ENCODE measurements at regions of chr6 and their contacts with region 1.

Region 1: GRCh38 chr6:31827286-31828079 is at the start of gene HSPA1B:
- DNase-seq: peak; percentile 100
- ATAC-seq: peak; percentile 87
- H3K4me3 ChIP-seq: peak within 1 kb of the TSS; percentile 71 to 72
- H3K27ac ChIP-seq: peak within 1 kb of the TSS; percentile 94
- H3K4me1 ChIP-seq: peaks cover 47 to 71% of the 10 kb centered on the region in 2 experiments
- H3K27me3 ChIP-seq: no peaks in the 10 kb centered on the region
- CTCF ChIP-seq: no peak
- POLR2A ChIP-seq: peak; percentile 99
- RAD21 ChIP-seq: no peak
- total RNA-seq, gene HSPA1B: 214 TPM

Region 2: DNA sequence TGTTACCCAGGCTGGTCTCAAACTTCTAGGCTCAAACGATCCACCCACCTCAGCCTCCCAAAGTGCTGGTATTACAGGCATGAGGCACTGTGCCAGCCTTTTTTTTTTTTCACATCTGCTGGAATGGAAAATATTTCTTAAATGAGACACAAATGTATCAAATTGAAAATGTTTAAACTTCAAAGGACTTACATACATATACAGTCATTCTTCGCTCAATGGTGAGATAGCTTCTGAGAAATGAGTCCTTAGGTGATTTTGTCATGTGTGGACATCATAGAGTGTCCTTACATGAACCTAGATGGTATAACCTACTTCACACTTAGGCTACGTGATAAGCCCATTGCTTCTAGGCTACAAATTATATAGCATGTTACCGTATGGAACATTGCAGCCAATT is 381.0 kb before region 1 on chr6:
- CTCF ChIA-PET with region 1: no interaction called
- POLR2A ChIA-PET with region 1: no interaction called
- RAD21 ChIA-PET with region 1: no interaction called
- intact Hi-C with region 1: no loop called
- DNase-seq: no peak
- ATAC-seq: no peak
- H3K4me3 ChIP-seq: no peak overlapping the region
- H3K27ac ChIP-seq: no peak overlapping the region
- H3K4me1 ChIP-seq: peaks cover 2 to 10% of the 10 kb centered on the region in 2 experiments; a peak in 1 of 4 replicates
- H3K27me3 ChIP-seq: no peaks in the 10 kb centered on the region
- CTCF ChIP-seq: no peak
- POLR2A ChIP-seq: no peak
- RAD21 ChIP-seq: no peak

Region 3: GRCh38 chr6:31680840-31681671 is 146.4 kb before region 1 on chr6 and contains the start of gene LY6G5C:
- CTCF ChIA-PET with region 1: interaction called, 5 read pairs
- POLR2A ChIA-PET with region 1: interaction called, 4 read pairs
- RAD21 ChIA-PET with region 1: no interaction called
- intact Hi-C with region 1: loop called (anchors 1 kb)
- DNase-seq: peak; percentile 73
- ATAC-seq: peak; percentile 85
- H3K4me3 ChIP-seq: peak within 1 kb of the TSS; percentile 53 to 61
- H3K27ac ChIP-seq: peak within 1 kb of the TSS; percentile 70
- H3K4me1 ChIP-seq: peaks cover 4 to 19% of the 10 kb centered on the region in 2 experiments; a peak in 3 of 4 replicates
- H3K27me3 ChIP-seq: no peaks in the 10 kb centered on the region
- CTCF ChIP-seq: peak; percentile 43 to 90 (median 65)
- POLR2A ChIP-seq: no peak
- RAD21 ChIP-seq: peak; percentile 99
- total RNA-seq, gene LY6G5C: 1.7 TPM

Region 4: GRCh38 chr6:31769684-31770371 is 57.7 kb before region 1 on chr6:
- CTCF ChIA-PET with region 1: interaction called, 12 read pairs
- POLR2A ChIA-PET with region 1: interaction called, 47 read pairs
- RAD21 ChIA-PET with region 1: interaction called in 1 of 2 experiments, 6 read pairs
- intact Hi-C with region 1: loop called (anchors 2 kb)
- DNase-seq: peak; percentile 42
- ATAC-seq: peak; percentile 86
- H3K4me3 ChIP-seq: no peak overlapping the region
- H3K27ac ChIP-seq: no peak overlapping the region
- H3K4me1 ChIP-seq: peaks cover 17 to 38% of the 10 kb centered on the region in 2 experiments
- H3K27me3 ChIP-seq: no peaks in the 10 kb centered on the region
- CTCF ChIP-seq: peak in 2 of 3 experiments; percentile 95 to 97; a peak in 4 of 6 replicates
- POLR2A ChIP-seq: no peak
- RAD21 ChIP-seq: no peak

Region 5: GRCh38 chr6:31795616-31796298 is 31.7 kb before region 1 on chr6 and contains the start of gene VARS1:
- CTCF ChIA-PET with region 1: interaction called, 5 read pairs
- POLR2A ChIA-PET with region 1: interaction called, 19 read pairs
- RAD21 ChIA-PET with region 1: interaction called in 1 of 2 experiments, 5 read pairs
- intact Hi-C with region 1: loop called (anchors 1 kb)
- DNase-seq: peak; percentile 82
- ATAC-seq: peak; percentile 80
- H3K4me3 ChIP-seq: peak within 1 kb of the TSS; percentile 70 to 93
- H3K27ac ChIP-seq: peak within 1 kb of the TSS; percentile 98
- H3K4me1 ChIP-seq: peaks cover 24 to 45% of the 10 kb centered on the region in 2 experiments
- H3K27me3 ChIP-seq: no peaks in the 10 kb centered on the region
- CTCF ChIP-seq: peak; percentile 56 to 98 (median 82)
- POLR2A ChIP-seq: no peak
- RAD21 ChIP-seq: peak; percentile 92
- total RNA-seq, gene VARS1: 254 TPM

Region 6: DNA sequence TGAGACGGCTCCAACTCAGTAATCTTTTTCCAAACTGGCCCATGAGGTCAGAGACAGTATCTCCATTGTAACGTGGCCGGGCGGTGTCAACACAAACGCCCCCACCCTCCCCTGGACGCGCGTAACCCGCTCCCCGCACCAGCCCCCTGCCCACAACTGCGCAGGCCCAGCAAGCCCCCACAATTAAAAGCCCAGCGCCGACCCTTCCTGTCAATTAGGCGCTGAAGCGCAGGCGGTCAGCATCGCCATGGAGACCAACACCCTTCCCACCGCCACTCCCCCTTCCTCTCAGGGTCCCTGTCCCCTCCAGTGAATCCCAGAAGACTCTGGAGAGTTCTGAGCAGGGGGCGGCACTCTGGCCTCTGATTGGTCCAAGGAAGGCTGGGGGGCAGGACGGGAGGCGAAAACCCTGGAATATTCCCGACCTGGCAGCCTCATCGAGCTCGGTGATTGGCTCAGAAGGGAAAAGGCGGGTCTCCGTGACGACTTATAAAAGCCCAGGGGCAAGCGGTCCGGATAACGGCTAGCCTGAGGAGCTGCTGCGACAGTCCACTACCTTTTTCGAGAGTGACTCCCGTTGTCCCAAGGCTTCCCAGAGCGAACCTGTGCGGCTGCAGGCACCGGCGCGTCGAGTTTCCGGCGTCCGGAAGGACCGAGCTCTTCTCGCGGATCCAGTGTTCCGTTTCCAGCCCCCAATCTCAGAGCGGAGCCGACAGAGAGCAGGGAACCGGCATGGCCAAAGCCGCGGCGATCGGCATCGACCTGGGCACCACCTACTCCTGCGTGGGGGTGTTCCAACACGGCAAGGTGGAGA is 12.3 kb before region 1 on chr6 and contains the starts of genes HSPA1A and HSPA1L:
- CTCF ChIA-PET with region 1: no interaction called
- POLR2A ChIA-PET with region 1: interaction called, 24 read pairs
- RAD21 ChIA-PET with region 1: no interaction called
- intact Hi-C with region 1: no loop called
- DNase-seq: no peak
- ATAC-seq: no peak
- H3K4me3 ChIP-seq: peak within 1 kb of the TSS; percentile 32 to 54
- H3K27ac ChIP-seq: peak within 1 kb of the TSS; percentile 81
- H3K4me1 ChIP-seq: peaks cover 29 to 33% of the 10 kb centered on the region in 2 experiments
- H3K27me3 ChIP-seq: no peaks in the 10 kb centered on the region
- CTCF ChIP-seq: no peak
- POLR2A ChIP-seq: no peak
- RAD21 ChIP-seq: no peak
- total RNA-seq, gene HSPA1A: 5.0 TPM
- total RNA-seq, gene HSPA1L: 0.12 TPM

Region 7: GRCh38 chr6:31862344-31863227 is 35.1 kb after region 1 on chr6 and contains the start of gene NEU1:
- CTCF ChIA-PET with region 1: no interaction called
- POLR2A ChIA-PET with region 1: interaction called, 17 read pairs
- RAD21 ChIA-PET with region 1: no interaction called
- intact Hi-C with region 1: no loop called
- DNase-seq: peak; percentile 100
- ATAC-seq: peak; percentile 96
- H3K4me3 ChIP-seq: peak within 1 kb of the TSS; percentile 78 to 79
- H3K27ac ChIP-seq: peak within 1 kb of the TSS; percentile 41
- H3K4me1 ChIP-seq: peaks cover 0 to 31% of the 10 kb centered on the region in 2 experiments; a peak in 3 of 4 replicates
- H3K27me3 ChIP-seq: no peaks in the 10 kb centered on the region
- CTCF ChIP-seq: no peak
- POLR2A ChIP-seq: peak; percentile 83
- RAD21 ChIP-seq: no peak
- total RNA-seq, gene NEU1: 15.1 TPM

Region 8: DNA sequence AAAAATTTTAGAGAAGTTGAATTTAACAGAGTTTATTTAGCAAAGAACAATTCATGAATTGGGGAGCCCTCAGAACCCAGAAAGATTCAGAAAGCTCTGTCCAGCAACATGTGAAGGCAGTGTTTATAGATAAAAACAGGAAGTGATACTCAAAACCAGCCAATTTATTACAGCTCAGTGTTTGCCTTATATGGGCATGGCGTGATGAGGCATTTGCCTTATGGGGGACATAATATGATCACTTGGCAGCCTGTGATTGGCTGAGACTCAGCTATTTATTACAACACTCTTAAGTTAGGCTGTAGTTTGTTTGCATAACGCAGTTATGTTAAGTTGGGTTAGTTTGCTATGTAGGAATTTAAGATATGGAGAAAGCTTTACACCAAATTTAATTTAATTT is 1234.5 kb after region 1 on chr6:
- CTCF ChIA-PET with region 1: no interaction called
- POLR2A ChIA-PET with region 1: no interaction called
- RAD21 ChIA-PET with region 1: no interaction called
- intact Hi-C with region 1: no loop called
- DNase-seq: no peak
- ATAC-seq: no peak; the same call in 1 of the 2 replicates
- H3K4me3 ChIP-seq: no peak overlapping the region
- H3K27ac ChIP-seq: no peak overlapping the region
- H3K4me1 ChIP-seq: no peaks in the 10 kb centered on the region
- H3K27me3 ChIP-seq: peaks cover 11% of the 10 kb centered on the region; the same call in 1 of the 2 replicates
- CTCF ChIP-seq: no peak
- POLR2A ChIP-seq: no peak
- RAD21 ChIP-seq: no peak